ENCODE measurements at regions of chr6 and their contacts with region 1.

Region 1: DNA sequence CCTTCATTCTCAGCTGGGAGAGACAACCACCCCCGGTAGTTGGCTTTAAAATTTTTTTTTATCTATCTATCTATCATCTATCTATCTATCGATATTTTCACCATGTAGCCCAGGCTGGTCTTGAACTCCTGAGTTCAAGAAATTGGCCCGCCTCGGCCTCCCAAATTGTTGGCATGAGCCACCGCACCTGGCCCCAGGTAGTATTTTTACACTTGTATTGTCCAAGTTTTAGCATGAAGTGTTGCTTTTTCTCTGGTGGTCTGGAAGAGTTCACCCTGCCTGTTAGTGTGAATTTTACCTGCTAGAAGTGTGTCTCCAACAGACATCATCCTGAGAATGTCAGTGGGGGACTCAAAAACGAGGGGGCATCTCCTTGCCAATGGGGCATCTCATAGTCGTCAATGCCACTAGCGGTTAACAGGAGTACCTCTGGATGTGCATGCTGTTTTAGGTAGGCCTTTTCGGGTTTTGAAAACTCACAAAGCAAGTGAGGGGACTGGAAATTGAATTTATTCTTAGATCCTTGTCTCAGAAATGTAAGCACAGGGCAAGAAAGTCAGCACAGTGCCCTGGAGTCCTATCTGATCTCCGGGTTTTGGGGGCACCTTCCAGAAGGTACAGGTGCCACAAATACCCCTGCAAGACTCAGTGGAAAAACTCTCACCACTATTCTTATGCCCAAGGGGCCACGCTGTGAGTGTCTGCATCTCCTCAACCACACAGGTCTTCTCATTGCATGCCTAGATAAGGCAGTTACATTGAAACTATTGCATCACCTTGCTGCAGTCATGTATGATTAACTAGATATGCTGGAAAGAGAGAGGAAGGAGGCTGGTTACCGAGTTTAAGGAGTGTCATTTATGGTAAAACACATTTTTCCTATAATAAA is 37.1 kb downstream of the TNFAIP3 start:
- DNase-seq: peak; percentile 75
- ATAC-seq: peak; percentile 85
- H3K4me3 Mint-ChIP-seq: peak overlapping the region; percentile 69
- H3K27ac Mint-ChIP-seq: peak overlapping the region; percentile 98
- H3K4me1 Mint-ChIP-seq: peaks cover 62% of the 10 kb centered on the region
- H3K27me3 Mint-ChIP-seq: no peaks in the 10 kb centered on the region

Region 2: GRCh38 chr6:137641474-137642077 is 262.6 kb before region 1 on chr6:
- CTCF ChIA-PET with region 1: no interaction called
- POLR2A ChIA-PET with region 1: no interaction called
- intact Hi-C with region 1: no loop called
- DNase-seq: peak; percentile 81
- ATAC-seq: peak; percentile 77
- H3K4me3 Mint-ChIP-seq: no peak overlapping the region
- H3K27ac Mint-ChIP-seq: no peak overlapping the region
- H3K4me1 Mint-ChIP-seq: peaks cover 13% of the 10 kb centered on the region
- H3K27me3 Mint-ChIP-seq: peaks cover 10% of the 10 kb centered on the region

Region 3: GRCh38 chr6:137680705-137681346 is 223.4 kb before region 1 on chr6:
- CTCF ChIA-PET with region 1: no interaction called
- POLR2A ChIA-PET with region 1: interaction called, 4 read pairs
- intact Hi-C with region 1: loop called in 1 of 2 experiments (anchors 1 kb)
- DNase-seq: no peak
- ATAC-seq: peak; percentile 62
- H3K4me3 Mint-ChIP-seq: peak overlapping the region; percentile 2
- H3K27ac Mint-ChIP-seq: peak overlapping the region; percentile 67
- H3K4me1 Mint-ChIP-seq: peaks cover 53% of the 10 kb centered on the region
- H3K27me3 Mint-ChIP-seq: peaks cover 12% of the 10 kb centered on the region

Region 4: DNA sequence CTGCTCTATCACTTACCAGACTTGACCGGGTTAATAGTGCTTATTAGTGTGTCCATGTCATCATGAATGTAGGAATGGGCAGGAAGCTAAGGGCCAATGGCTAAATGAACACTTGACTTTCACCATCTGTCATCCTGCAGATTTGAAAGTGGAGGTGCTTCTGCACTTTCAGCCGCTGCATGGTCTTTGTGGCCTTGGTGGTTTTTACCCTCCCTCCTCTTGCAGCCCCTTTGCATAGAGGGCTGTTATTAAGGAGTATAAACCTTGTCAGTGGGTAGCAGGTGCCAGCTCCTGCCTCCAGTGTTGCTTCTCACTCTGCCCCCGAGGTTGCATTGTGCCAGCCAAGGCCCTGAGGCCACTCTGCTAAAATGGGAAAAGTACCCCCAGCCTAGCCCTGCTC is 159.3 kb before region 1 on chr6:
- CTCF ChIA-PET with region 1: no interaction called
- POLR2A ChIA-PET with region 1: no interaction called
- intact Hi-C with region 1: no loop called
- DNase-seq: no peak
- ATAC-seq: no peak
- H3K4me3 Mint-ChIP-seq: no peak overlapping the region
- H3K27ac Mint-ChIP-seq: no peak overlapping the region
- H3K4me1 Mint-ChIP-seq: peaks cover 10% of the 10 kb centered on the region
- H3K27me3 Mint-ChIP-seq: peaks cover 2% of the 10 kb centered on the region

Region 5: DNA sequence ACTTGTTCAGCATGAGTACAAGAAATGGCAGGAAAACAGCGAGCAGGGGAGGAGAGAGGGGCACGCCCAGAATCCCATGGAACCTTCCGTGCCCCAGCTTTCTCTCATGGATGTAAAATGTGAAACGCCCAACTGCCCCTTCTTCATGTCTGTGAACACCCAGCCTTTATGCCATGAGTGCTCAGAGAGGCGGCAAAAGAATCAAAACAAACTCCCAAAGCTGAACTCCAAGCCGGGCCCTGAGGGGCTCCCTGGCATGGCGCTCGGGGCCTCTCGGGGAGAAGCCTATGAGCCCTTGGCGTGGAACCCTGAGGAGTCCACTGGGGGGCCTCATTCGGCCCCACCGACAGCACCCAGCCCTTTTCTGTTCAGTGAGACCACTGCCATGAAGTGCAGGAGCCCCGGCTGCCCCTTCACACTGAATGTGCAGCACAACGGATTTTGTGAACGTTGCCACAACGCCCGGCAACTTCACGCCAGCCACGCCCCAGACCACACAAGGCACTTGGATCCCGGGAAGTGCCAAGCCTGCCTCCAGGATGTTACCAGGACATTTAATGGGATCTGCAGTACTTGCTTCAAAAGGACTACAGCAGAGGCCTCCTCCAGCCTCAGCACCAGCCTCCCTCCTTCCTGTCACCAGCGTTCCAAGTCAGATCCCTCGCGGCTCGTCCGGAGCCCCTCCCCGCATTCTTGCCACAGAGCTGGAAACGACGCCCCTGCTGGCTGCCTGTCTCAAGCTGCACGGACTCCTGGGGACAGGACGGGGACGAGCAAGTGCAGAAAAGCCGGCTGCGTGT is 25.5 kb before region 1 on chr6:
- CTCF ChIA-PET with region 1: interaction called, 10 read pairs
- POLR2A ChIA-PET with region 1: interaction called, 5 read pairs
- intact Hi-C with region 1: loop called (anchors 1 kb)
- DNase-seq: no peak
- ATAC-seq: no peak
- H3K4me3 Mint-ChIP-seq: peak overlapping the region; percentile 60
- H3K27ac Mint-ChIP-seq: peak overlapping the region; percentile 99
- H3K4me1 Mint-ChIP-seq: peaks cover 86% of the 10 kb centered on the region
- H3K27me3 Mint-ChIP-seq: no peaks in the 10 kb centered on the region

Region 6: DNA sequence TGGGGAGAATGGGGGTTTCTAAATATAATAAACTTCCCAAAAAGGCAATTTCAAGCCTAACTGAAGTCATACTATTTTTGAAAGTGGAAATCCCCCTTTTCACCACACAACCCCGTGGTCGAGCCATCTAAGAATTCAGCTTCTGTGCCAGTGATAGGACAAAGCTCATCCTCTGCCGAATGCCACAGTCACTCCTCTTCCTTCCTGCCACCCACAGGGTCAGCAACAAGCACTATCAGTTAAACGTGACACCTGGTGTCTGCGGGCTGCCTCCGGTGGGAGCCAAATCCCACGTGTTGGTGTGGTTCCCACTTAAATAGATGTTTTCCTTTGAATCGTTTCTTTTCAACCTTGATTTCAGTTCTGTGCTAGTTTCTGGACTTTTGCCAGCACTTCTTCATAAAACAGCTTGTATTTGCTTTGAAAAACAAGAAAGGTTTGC is 23.6 kb after region 1 on chr6:
- CTCF ChIA-PET with region 1: interaction called, 6 read pairs
- POLR2A ChIA-PET with region 1: interaction called, 3 read pairs
- intact Hi-C with region 1: loop called (anchors 1 to 2 kb)
- DNase-seq: peak; percentile 86
- ATAC-seq: peak; percentile 97
- H3K4me3 Mint-ChIP-seq: peak overlapping the region; percentile 59
- H3K27ac Mint-ChIP-seq: peak overlapping the region; percentile 94
- H3K4me1 Mint-ChIP-seq: peaks cover 58% of the 10 kb centered on the region
- H3K27me3 Mint-ChIP-seq: no peaks in the 10 kb centered on the region

Region 7: GRCh38 chr6:137982418-137983189 is 78.4 kb after region 1 on chr6:
- CTCF ChIA-PET with region 1: no interaction called
- POLR2A ChIA-PET with region 1: no interaction called
- intact Hi-C with region 1: no loop called
- DNase-seq: no peak
- ATAC-seq: no peak
- H3K4me3 Mint-ChIP-seq: no peak overlapping the region
- H3K27ac Mint-ChIP-seq: no peak overlapping the region
- H3K4me1 Mint-ChIP-seq: peaks cover 19% of the 10 kb centered on the region
- H3K27me3 Mint-ChIP-seq: no peaks in the 10 kb centered on the region

Measured in activated CD4-positive, alpha-beta T cell treated with anti-CD3 and anti-CD28 coated beads for 36 hours (primary cell).